Common myeloid progenitor, CD34-positive (primary cell): ENCODE measurements at regions of chr6 and their contacts with region 1.

Region 1: DNA sequence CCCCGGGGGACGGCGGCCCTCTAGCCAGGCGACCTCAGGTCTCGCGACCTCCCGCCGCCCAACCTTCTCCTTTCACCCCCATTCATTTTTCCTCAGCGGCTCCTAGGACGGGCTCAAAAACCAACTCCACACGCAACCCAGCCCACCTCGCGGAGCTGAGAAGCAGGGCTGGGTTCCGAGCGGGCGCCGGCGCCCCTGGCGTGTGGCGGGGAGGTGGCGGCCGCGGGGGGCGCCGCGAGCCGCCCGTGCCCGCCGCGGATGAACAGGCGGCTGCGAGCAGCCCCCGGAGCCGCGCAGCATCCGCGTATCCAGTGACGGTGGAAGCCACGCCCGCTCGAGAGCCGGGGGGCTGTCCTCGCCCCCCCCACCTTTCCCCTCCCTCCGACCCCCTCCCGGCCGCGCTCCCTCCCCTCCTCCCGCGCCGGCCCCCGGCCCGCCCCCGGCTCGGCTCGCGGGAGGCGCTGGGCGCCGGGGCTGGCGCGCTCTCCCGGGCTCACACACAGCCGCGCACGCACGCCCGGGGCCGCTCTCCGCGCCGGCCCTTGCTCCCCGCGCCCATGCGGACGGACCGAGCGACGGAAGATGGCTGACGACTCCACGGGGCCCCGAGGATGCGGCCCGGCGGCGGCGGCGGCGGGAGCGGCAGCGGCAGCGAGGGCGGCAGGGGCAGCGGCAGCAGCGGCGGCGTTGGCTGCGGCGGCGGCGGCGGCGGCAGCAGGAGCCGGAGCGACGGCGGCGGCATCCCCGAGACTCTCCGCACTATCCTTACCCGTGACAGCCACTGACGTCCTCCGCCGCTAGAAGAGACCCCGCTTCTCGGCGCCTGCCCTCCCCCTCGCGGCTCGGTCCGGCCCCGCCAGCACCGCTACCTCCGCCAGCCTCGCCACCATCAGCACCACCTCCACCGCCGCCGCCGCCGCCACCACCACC is at the start of gene SOBP:
- DNase-seq: peak; percentile 34 to 67 (median 60)
- H3K4me3 ChIP-seq: peak within 1 kb of the TSS; percentile 30 to 82 (median 74)
- H3K27ac ChIP-seq: no peak within 1 kb of the TSS
- H3K4me1 ChIP-seq: peaks cover 0 to 32% (median 28%) of the 10 kb centered on the region in 4 experiments
- H3K27me3 ChIP-seq: peaks cover 30 to 90% (median 59%) of the 10 kb centered on the region in 5 experiments

Region 2: GRCh38 chr6:107459283-107460082 is 30.4 kb before region 1 on chr6 and contains the start of gene PDSS2:
- CTCF ChIA-PET with region 1: interaction called, 15 read pairs
- POLR2A ChIA-PET with region 1: interaction called, 3 read pairs
- DNase-seq: peak; percentile 96 to 98 (median 98)
- H3K4me3 ChIP-seq: peak within 1 kb of the TSS; percentile 81 to 99 (median 93)
- H3K27ac ChIP-seq: peak within 1 kb of the TSS; percentile 54 to 85
- H3K4me1 ChIP-seq: peaks cover 5 to 23% (median 11%) of the 10 kb centered on the region in 4 experiments
- H3K27me3 ChIP-seq: peaks cover 0 to 3% (median 0%) of the 10 kb centered on the region in 5 experiments

Region 3: GRCh38 chr6:107470364-107470763 is 19.5 kb before region 1 on chr6:
- CTCF ChIA-PET with region 1: no interaction called
- POLR2A ChIA-PET with region 1: no interaction called
- DNase-seq: no peak
- H3K4me3 ChIP-seq: no peak overlapping the region
- H3K27ac ChIP-seq: no peak overlapping the region
- H3K4me1 ChIP-seq: no peaks in the 10 kb centered on the region
- H3K27me3 ChIP-seq: peaks cover 2 to 6% (median 4%) of the 10 kb centered on the region in 5 experiments

Region 4: DNA sequence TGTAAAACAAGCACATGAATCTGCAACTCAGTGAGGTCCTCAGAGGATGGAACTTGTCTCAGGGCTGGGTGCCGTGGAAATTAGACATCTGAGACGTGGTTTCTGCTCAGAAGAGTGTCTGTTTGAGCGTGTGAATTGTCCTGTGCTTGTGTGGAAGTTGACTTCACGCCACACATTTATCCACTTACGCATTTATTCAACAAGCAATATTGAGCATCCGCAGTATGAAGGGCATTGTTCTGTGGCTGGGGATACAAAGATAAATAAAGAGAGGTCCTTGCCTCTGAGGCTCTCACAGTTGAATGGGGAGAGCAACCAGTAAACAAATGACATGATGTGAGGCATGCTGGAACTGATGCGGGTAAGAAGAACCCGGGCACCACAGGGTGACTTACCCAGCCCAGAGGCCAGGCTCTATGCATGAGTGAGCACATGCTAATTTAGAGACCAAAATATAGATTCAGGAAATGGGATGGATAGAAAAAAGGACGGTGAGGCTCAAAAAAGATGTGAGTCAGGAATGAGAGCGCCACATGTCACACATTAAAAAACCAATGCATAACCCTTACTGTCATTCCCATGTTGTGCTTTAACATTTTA is 60.4 kb after region 1 on chr6:
- CTCF ChIA-PET with region 1: no interaction called
- POLR2A ChIA-PET with region 1: no interaction called
- DNase-seq: no peak
- H3K4me3 ChIP-seq: no peak overlapping the region
- H3K27ac ChIP-seq: no peak overlapping the region
- H3K4me1 ChIP-seq: no peaks in the 10 kb centered on the region
- H3K27me3 ChIP-seq: peaks cover 0 to 6% (median 0%) of the 10 kb centered on the region in 5 experiments